Calu3 (cell line): ENCODE measurements at regions of chr6 and their contacts with region 1.

Region 1: DNA sequence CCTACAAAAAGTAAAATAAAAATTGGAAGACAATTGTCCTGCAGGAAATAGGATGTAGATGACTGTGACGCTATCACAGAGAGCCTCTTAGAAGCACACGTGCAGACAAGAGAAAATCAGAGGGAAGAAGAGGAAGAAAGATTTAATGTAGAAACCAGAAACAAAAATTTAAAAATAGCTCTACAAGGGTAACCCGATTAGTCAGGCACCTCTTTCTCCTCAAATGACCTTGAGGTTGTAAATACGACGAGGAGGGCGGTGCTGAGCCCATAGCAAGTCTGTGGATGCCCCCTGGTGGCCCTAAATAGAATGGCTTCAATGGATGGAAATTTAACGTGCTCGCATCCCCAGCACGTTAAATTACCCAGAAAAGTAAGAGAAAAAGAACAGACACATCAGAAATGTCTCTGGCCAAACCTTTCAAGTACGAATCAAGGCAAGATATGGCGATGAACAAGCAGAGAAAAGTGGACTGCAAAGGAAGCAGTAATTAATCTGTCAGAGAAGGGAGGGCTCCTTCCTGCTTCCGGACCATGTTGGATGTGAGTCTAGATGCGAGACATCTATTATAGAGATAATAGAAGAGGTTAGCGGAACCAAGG is 4.2 kb upstream of the PRPH2 start:
- DNase-seq: peak; percentile 78
- H3K4me3 Mint-ChIP-seq: peak overlapping the region; percentile 78
- H3K27ac Mint-ChIP-seq: no peak overlapping the region
- H3K4me1 Mint-ChIP-seq: peaks cover 16% of the 10 kb centered on the region
- H3K27me3 Mint-ChIP-seq: peaks cover 7% of the 10 kb centered on the region
- CTCF ChIP-seq: peak; percentile 87

Region 2: DNA sequence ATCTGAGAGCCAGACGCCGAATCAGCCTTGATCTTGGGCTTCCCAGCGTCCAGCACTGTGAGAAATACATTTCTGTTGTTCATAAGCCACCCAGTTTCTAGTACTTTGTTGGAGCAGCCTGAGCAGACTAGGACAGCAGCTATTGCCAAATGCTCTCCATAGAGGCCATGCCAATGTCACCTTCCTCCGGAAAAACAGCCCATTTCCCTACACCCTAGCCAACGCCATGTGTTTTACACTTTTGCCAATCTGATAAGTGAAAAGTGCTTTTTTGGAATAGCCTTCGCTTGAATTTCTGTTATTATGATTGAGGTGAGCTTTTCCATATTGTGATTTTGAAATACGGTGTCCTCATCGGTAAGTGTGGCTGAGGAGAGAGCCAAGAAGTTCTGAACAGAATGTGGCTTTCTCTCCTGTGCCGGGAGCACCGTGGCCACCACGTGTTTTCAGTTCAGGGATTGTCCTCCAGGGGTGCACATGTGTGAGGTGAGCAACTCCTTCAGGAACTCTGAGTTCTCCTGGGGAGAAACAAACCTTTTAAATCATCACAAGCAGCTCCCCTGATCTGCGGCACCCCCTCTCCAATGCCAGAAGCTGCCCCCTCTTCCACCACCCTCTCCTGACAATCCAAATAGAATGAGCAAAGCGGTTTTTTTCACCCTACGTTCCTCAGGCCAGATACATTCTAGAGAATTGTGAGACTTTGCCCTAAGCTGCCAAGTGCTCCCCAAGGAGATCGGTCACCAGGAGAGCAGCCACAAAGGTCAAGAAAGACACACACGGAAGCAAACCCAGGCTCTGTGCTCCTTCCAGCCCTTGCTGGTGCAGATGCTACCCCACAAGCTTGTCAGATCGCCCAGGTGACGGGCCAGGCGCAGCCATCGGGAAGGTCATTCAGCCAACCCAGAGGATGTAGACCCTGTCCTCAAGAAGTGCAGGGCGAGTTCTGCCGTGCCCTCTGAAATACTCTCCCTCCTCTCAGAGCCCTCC is 640.2 kb before region 1 on chr6:
- CTCF ChIA-PET with region 1: interaction called, 15 read pairs
- intact Hi-C with region 1: no loop called
- DNase-seq: no peak
- H3K4me3 Mint-ChIP-seq: no peak overlapping the region
- H3K27ac Mint-ChIP-seq: no peak overlapping the region
- H3K4me1 Mint-ChIP-seq: peaks cover 18% of the 10 kb centered on the region
- H3K27me3 Mint-ChIP-seq: no peaks in the 10 kb centered on the region
- CTCF ChIP-seq: no peak

Region 3: GRCh38 chr6:42363926-42364849 is 362.4 kb before region 1 on chr6:
- CTCF ChIA-PET with region 1: no interaction called
- intact Hi-C with region 1: loop called (anchors 5 kb)
- DNase-seq: no peak
- H3K4me3 Mint-ChIP-seq: no peak overlapping the region
- H3K27ac Mint-ChIP-seq: no peak overlapping the region
- H3K4me1 Mint-ChIP-seq: peaks cover under 1% of the 10 kb centered on the region
- H3K27me3 Mint-ChIP-seq: peaks cover 36% of the 10 kb centered on the region
- CTCF ChIP-seq: no peak

Region 4: GRCh38 chr6:42661540-42662153 is 64.9 kb before region 1 on chr6:
- CTCF ChIA-PET with region 1: interaction called, 13 read pairs
- intact Hi-C with region 1: loop called (anchors 1 kb)
- DNase-seq: peak; percentile 87
- H3K4me3 Mint-ChIP-seq: no peak overlapping the region
- H3K27ac Mint-ChIP-seq: peak overlapping the region; percentile 30
- H3K4me1 Mint-ChIP-seq: no peaks in the 10 kb centered on the region
- H3K27me3 Mint-ChIP-seq: no peaks in the 10 kb centered on the region
- CTCF ChIP-seq: peak; percentile 92

Region 5: DNA sequence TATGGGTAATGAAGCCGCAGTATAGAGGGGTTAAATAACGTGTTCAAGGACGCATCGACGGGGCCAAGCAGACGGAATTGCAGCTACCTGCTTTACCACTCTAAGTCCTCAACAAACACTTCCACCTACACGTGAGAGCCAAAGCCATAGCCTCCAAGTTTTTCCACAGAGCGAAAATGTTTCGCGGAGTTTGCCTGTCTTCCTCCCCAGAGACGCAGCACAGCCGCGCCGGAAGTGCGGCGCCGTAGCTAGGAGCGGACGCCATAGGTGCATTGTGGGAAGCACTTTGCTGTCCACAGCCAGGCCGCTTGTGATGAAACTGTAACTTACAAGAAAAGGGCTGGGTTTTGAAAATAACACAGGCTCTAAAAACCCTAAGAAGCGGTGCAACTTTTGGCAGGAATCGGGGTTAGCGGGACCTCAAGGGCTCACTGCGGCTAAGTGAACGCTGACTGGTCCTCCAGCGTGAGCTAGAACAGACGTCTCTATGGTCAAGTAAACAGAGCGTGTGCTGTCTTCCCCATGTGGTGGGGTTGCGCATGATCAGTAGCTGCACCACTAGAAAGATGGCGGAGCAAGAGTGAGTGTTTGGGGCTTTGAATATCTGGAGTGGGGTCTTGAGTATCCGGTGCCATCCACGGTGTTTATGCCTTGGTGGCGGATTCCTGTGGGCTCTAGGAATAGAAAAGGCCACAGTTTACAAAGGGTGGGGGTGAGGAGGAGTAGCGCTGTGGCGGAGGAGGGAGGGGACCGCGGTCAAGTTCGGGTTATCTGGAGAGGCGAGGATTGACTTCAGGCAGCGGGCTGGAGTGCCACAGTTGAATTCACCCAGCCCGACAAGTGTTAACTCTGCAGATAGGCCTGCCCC is 153.0 kb after region 1 on chr6 and contains the start of gene RPL7L1:
- CTCF ChIA-PET with region 1: interaction called, 3 read pairs
- intact Hi-C with region 1: loop called (anchors 1 kb)
- DNase-seq: peak; percentile 88
- H3K4me3 Mint-ChIP-seq: peak within 1 kb of the TSS; percentile 87
- H3K27ac Mint-ChIP-seq: peak within 1 kb of the TSS; percentile 99
- H3K4me1 Mint-ChIP-seq: no peaks in the 10 kb centered on the region
- H3K27me3 Mint-ChIP-seq: no peaks in the 10 kb centered on the region
- CTCF ChIP-seq: no peak
- total RNA-seq, gene RPL7L1: 144 and 154 TPM in 2 replicates